BJ (cell line): ENCODE measurements at regions of chr11 and their contacts with region 1.

Region 1: DNA sequence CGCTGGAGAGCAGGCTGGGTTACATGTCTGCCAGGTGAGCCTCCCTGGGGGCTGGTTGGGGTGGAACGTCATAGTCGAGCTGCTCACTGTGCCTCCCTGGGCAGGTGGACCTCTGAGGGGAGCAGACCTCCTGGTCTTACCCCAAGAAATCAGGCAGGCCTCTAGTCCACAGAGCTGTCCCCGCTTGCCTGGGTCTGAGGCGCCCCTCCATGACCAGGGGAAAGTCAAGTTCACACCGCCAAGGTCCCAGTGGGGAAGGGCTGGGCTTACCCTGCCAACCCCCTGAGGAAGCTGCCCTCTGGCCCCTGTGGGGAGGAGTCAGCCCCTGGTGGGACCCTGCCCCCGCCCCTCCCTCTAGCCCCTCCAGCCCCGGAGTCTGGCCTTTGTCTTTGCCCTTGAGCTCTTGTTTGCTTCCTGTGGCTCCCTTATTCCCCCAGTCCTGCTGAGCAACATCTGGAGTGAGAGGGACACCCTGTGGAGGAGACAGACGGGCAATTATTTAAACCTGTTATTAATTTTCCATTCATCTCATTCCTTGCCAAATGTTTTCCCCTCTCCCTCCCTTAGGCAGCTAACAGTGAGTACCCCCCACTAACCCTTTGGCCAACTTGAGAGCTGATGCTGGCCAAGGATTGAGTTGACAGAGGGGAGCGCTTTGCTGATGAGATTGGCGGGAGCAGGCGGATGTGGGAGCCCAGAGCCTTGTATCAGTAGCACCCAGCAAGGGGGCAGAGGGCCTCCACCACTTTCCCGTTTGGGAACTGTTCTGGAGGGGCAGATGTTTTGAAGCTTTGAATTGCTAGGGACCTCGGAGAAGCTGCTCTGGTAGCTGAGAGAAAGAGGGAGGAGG is 83.4 kb downstream of the CEP164 start:
- DNase-seq: no peak
- H3K4me3 ChIP-seq: no peak overlapping the region
- H3K27me3 ChIP-seq: no peaks in the 10 kb centered on the region
- CTCF ChIP-seq: no peak

Region 2: DNA sequence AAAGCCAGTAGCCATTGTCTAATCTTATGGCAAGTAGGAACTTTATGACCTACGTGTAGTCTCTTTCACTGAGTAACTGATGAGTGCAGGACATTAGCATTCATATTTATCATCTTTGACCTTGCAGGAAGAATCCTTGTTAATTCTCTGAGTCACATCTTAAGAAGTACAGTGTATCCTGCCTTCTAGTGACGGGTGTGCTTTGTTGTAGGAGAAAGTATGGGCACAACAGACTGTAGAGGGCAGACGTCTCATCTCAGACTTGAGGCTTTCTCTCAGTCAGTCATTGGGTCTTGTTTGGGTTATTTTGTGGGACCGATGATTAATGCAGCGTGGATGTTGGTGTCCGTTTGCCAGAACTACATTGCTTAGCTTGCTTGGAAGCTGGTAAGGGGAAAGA is 171.8 kb before region 1 on chr11:
- CTCF ChIA-PET with region 1: no interaction called
- POLR2A ChIA-PET with region 1: no interaction called
- DNase-seq: peak; percentile 94
- H3K4me3 ChIP-seq: no peak overlapping the region
- H3K27me3 ChIP-seq: no peaks in the 10 kb centered on the region
- CTCF ChIP-seq: peak; percentile 76

Region 3: DNA sequence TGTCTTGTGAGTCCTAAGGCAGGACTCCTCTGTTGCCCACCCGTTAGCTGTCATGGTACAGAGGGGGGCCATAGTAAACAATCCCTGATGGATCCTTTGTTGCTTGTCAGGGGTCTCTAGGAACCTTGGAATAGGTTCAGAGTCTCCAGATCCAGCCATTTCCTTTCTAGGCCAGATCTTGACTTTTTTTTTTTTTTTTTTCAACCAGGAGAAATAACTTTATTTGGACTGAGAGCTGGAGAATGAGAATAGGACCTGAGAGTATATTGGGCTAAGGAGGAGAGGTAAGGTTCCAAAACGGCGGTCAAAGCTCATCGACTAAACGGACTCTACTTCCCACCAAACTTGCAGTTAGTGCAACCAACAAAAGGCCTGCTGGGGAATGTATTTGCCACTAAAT is 75.7 kb before region 1 on chr11:
- CTCF ChIA-PET with region 1: no interaction called
- POLR2A ChIA-PET with region 1: interaction called, 23 read pairs
- DNase-seq: no peak
- H3K4me3 ChIP-seq: no peak overlapping the region
- H3K27me3 ChIP-seq: no peaks in the 10 kb centered on the region
- CTCF ChIP-seq: no peak